Astrocyte of the cerebellum (primary cell): ENCODE measurements at regions of chr13 and their contacts with region 1.

Region 1: GRCh38 chr13:110812121-110812868 is 98.8 kb downstream of the ING1 start:
- DNase-seq: no peak
- H3K4me3 ChIP-seq: peak overlapping the region; percentile 30
- CTCF ChIP-seq: peak; percentile 10

Region 2: GRCh38 chr13:110771194-110771593 is 41.1 kb before region 1 on chr13:
- in situ Hi-C with region 1: no loop called
- DNase-seq: no peak
- H3K4me3 ChIP-seq: no peak overlapping the region
- CTCF ChIP-seq: no peak

Region 3: GRCh38 chr13:110869805-110870706 is 57.8 kb after region 1 on chr13:
- in situ Hi-C with region 1: loop called (anchors 5 kb)
- DNase-seq: peak; percentile 100
- H3K4me3 ChIP-seq: peak overlapping the region; percentile 27
- CTCF ChIP-seq: no peak